GM13976 (cell line): ENCODE measurements at regions of chr10 and their contacts with region 1.

Region 1: DNA sequence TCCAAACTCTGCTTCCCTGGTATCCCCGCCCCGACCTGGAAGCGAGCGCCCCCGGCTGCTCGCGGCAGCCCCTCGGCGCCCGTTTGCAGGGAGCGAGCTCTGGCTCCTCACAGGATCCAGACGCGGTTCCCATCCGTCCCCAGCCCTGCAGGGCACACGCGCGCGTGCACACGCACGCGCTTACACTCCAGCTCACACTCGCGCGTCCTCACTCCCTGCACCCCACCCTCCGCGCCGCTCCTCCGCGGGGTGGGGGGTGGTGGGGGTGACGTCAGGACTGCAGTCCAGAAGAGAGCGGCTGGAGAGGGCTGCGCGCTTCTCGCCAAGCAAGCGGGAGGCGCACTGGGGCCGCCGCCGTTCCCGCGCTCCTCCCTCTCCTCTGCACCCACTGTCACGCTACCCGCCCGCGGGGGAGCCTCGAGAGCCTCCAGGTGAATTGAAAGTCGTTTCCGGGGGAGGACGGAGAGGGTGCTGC is 255.6 kb downstream of the OTUD1 start:
- DNase-seq: no peak
- CTCF ChIP-seq: no peak

Region 2: GRCh38 chr10:23314835-23315239 is 379.6 kb before region 1 on chr10:
- in situ Hi-C with region 1: loop called (anchors 25 kb)
- DNase-seq: peak; percentile 52
- CTCF ChIP-seq: peak; percentile 29